Pancreas (tissue), 10 donors: ENCODE measurements at regions of chr9 and their contacts with region 1.

Region 1: GRCh38 chr9:74333384-74334032 is 163.6 kb upstream of the RORB start:
- DNase-seq: no peak
- ATAC-seq: no peak
- H3K4me3 ChIP-seq: no peak overlapping the region
- H3K27ac ChIP-seq: no peak overlapping the region
- H3K4me1 ChIP-seq: no peaks in the 10 kb centered on the region
- H3K27me3 ChIP-seq: no peaks in the 10 kb centered on the region
- CTCF ChIP-seq: no peak

Region 2: DNA sequence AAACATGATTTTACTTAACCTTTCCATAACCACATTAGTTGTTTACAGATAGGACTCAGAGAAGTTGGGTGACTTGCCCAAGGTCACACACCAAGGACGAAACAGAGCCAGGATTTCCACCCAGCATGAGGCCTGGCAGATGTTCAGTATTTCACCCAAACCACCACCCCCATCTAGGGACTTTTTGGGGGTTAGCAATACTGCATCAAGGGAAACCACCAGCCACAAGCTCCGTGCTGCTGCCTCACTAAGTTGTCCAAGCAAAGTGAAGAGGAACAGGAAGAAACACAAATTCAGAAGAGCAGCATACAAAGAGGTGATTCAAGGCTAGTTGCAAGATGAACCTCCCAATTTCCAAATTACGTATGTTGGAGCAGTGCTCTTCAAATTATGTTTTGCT is 56.0 kb before region 1 on chr9:
- intact Hi-C with region 1: loop called in 1 of 3 experiments (anchors 10 kb)
- DNase-seq: no peak
- ATAC-seq: no peak
- H3K4me3 ChIP-seq: no peak overlapping the region
- H3K27ac ChIP-seq: no peak overlapping the region
- H3K4me1 ChIP-seq: no peaks in the 10 kb centered on the region
- H3K27me3 ChIP-seq: no peaks in the 10 kb centered on the region
- CTCF ChIP-seq: no peak